ENCODE measurements at regions of chr2 and their contacts with region 1.

Region 1: DNA sequence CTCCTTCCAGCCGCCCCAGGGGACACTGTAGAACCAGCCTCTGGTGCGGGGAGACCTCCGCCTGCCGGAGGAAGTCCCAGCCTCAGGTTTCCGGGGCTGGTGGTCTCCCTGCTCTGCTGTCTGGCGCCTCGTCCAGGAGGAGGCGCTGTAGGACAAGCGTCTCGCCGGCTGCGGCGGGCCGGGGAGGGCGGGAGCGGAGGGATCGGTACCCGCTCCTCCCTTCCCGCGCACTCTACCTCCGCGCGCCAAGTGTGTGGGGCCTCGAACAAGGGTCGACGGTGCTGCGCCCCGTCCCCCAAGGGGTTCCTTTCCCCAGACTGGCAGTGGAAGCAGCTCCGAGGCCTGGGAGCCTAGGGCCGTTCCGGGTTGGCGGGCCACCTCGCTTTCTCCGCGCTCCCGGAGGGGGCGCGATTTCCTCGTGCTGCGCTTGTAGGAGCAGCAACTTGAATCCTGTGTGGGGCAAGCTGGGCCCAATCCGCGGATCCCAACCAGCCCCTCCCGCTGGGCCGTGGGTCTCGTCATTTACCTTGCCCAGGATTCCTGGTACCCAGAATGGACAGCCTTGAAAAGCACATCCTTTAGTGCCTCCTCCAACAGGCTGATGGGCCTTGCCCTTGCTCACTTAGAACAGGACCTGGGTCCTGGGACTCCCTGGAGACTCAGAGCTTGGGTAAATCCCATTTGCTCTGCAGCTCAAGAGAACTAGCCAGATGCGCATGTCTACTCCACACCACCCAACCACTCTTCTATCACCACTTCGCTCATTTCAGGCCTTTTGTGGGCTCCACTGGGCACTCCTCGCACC is 10.6 kb upstream of the HOXD4 start:
- DNase-seq: peak; percentile 37 to 84 (median 75)
- ATAC-seq: peak; percentile 93
- H3K4me3 ChIP-seq: peak overlapping the region; percentile 28 to 38
- H3K4me3 Mint-ChIP-seq: peak overlapping the region; percentile 8
- H3K27ac ChIP-seq: no peak overlapping the region
- H3K27ac Mint-ChIP-seq: no peak overlapping the region
- H3K4me1 ChIP-seq: peaks cover 22% of the 10 kb centered on the region
- H3K4me1 Mint-ChIP-seq: peaks cover 32% of the 10 kb centered on the region
- H3K27me3 ChIP-seq: peaks cover 46 to 47% of the 10 kb centered on the region in 2 experiments
- H3K27me3 Mint-ChIP-seq: peaks cover 80% of the 10 kb centered on the region
- CTCF ChIP-seq: peak; percentile 76

Region 2: GRCh38 chr2:176114120-176114929 is 26.4 kb before region 1 on chr2:
- CTCF ChIA-PET with region 1: no interaction called
- POLR2A ChIA-PET with region 1: no interaction called
- intact Hi-C with region 1: no loop called
- DNase-seq: no peak
- ATAC-seq: no peak
- H3K4me3 ChIP-seq: no peak overlapping the region
- H3K4me3 Mint-ChIP-seq: no peak overlapping the region
- H3K27ac ChIP-seq: no peak overlapping the region
- H3K27ac Mint-ChIP-seq: no peak overlapping the region
- H3K4me1 ChIP-seq: no peaks in the 10 kb centered on the region
- H3K4me1 Mint-ChIP-seq: peaks cover 8% of the 10 kb centered on the region
- H3K27me3 ChIP-seq: peaks cover 62 to 91% of the 10 kb centered on the region in 2 experiments
- H3K27me3 Mint-ChIP-seq: peaks cover 84% of the 10 kb centered on the region
- CTCF ChIP-seq: no peak

Region 3: DNA sequence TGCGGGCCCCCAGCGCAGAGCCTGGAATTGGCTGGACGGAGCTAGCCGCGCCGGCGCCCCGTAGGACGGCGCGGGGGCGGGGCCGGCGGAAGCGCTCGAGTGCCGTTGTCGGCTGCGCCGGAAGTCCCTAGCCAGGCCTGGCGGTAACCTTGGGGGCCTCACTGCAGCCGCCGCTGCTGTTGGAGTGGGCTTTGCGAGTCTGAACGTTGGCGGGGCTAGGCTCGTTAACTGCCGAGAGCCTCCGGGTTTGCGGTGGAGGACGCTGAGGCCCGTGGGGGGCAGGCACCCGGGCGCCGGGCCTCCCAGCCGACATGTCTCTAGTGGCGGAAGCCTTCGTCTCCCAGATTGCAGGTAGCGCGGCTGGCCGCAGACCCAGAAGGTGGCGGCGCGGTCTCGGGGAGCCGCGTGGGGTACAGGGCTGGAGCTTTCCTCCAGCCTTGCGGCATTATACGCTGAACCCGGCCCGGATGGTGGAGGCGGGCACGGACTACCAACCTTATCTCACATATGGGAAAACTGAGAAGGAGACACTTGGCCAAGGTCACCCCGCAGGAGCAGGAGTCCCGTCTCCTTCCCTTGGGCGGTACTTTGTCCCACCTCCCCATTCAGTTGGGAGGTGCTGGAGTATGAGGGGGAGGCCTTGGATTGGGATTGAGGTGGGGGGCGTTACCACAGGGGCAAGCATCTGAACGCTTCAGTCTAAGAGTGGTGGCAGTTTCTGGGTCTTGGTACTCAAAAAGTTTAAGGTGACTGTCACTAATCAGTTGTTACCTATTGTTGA is 128.8 kb after region 1 on chr2 and contains the start of gene MTX2:
- CTCF ChIA-PET with region 1: no interaction called
- POLR2A ChIA-PET with region 1: no interaction called
- intact Hi-C with region 1: loop called in 1 of 2 experiments (anchors 5 kb)
- DNase-seq: peak; percentile 44 to 83 (median 69)
- ATAC-seq: peak; percentile 86
- H3K4me3 ChIP-seq: peak within 1 kb of the TSS; percentile 86 to 93
- H3K4me3 Mint-ChIP-seq: peak within 1 kb of the TSS; percentile 95
- H3K27ac ChIP-seq: peak within 1 kb of the TSS; percentile 67 to 76
- H3K27ac Mint-ChIP-seq: peak within 1 kb of the TSS; percentile 93
- H3K4me1 ChIP-seq: peaks cover 10% of the 10 kb centered on the region
- H3K4me1 Mint-ChIP-seq: peaks cover 40% of the 10 kb centered on the region
- H3K27me3 ChIP-seq: no peaks in the 10 kb centered on the region
- H3K27me3 Mint-ChIP-seq: peaks cover under 1% of the 10 kb centered on the region
- CTCF ChIP-seq: no peak
- total RNA-seq, gene MTX2: 4.5 to 6.8 TPM

Region 4: DNA sequence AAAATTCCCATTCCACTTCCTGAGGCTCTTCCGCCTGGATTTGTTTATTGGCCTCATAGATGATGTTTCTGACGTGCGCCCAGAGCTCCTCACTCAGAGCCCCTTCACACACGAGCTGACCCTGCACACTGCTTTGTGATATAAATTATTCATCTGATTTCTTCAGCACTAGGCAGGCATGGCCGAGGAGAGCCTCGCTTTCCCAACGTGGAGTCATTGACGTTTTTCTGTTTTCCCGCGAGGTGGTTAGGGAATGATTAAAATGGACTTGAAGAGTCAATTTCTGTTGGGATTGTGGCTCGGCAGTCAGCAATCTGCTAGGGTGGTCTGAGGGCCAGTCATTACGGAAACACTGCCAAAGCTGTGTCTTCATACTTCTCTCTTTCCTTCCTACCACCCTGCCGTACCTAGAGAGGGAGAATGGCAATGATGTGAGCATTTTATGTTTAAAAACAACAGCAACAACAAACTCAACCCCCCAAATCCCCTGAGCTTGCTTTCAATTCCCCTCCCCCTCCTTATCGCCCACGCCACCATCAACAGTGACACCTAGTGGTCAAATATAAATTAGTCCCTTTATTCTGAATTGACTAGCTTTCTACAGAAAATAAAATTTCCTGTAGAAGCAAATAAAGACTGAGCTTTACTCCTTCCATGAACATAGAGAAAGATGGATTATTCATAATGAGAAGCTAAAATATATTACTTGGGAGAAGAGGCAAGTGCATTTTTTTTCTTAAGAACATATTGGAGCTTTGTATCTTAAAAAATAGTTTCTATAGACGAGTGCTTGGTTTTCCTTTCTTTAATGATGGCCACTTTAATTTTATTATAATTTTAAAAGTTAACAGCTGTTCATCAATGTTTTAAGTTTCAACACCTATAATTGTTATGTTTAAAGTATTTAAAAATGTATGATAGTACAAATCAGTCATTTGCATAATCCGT is 413.7 kb after region 1 on chr2:
- CTCF ChIA-PET with region 1: interaction called, 19 read pairs
- POLR2A ChIA-PET with region 1: no interaction called
- intact Hi-C with region 1: loop called (anchors 2 to 5 kb)
- DNase-seq: peak in 6 of 9 experiments; percentile 16 to 72 (median 40)
- ATAC-seq: peak; percentile 59
- H3K4me3 ChIP-seq: peak overlapping the region; percentile 47 to 51
- H3K4me3 Mint-ChIP-seq: peak overlapping the region; percentile 84
- H3K27ac ChIP-seq: no peak overlapping the region
- H3K27ac Mint-ChIP-seq: no peak overlapping the region
- H3K4me1 ChIP-seq: no peaks in the 10 kb centered on the region
- H3K4me1 Mint-ChIP-seq: peaks cover 11% of the 10 kb centered on the region
- H3K27me3 ChIP-seq: peaks cover 3% of the 10 kb centered on the region in 2 experiments
- H3K27me3 Mint-ChIP-seq: peaks cover 42% of the 10 kb centered on the region
- CTCF ChIP-seq: peak; percentile 77

Region 5: DNA sequence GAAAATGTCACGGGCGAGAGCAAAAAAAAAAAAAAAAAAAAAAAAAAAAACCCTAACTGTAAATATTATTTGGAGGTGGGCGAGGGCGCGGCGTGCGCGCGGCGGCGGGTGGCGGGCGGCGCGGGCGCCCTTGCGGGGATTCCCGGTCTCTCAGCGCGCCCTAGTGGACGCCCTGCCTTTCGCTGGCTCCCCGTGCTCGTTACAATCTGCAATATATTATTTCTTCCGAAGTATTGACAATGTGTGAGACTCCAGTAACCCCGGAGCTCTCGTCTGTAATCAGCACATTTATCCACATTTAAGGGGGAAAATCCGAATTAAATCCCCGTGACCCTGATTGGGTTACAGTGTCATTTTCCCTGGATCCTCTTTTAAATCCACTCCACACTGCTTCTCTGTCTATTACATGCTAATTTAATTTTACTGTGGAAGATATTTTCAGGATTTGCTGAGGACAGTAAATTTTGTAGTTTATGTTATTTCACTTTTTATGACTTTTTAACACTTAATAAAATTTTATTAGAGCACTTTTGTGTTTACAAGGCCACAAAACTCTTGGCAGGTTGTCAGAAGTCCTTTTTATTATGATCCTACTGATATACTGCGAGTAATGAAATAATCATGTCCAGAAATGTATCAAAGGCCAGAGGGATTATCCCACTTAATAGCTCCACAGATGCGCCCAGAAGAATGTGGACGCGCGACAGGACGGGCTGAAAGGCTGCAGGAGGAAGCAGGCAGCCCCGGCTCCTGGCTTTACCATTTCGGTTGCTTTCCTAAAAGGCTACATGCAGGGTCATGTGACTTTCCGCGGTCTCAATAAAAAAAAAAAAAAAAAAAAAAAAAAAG is 497.7 kb after region 1 on chr2:
- CTCF ChIA-PET with region 1: interaction called, 5 read pairs
- POLR2A ChIA-PET with region 1: no interaction called
- intact Hi-C with region 1: loop called (anchors 5 kb)
- DNase-seq: peak; percentile 19 to 74 (median 59)
- ATAC-seq: peak; percentile 87
- H3K4me3 ChIP-seq: peak overlapping the region; percentile 48 to 55
- H3K4me3 Mint-ChIP-seq: peak overlapping the region; percentile 71
- H3K27ac ChIP-seq: no peak overlapping the region
- H3K27ac Mint-ChIP-seq: no peak overlapping the region
- H3K4me1 ChIP-seq: no peaks in the 10 kb centered on the region
- H3K4me1 Mint-ChIP-seq: peaks cover 8% of the 10 kb centered on the region
- H3K27me3 ChIP-seq: peaks cover 9 to 23% of the 10 kb centered on the region in 2 experiments
- H3K27me3 Mint-ChIP-seq: peaks cover 66% of the 10 kb centered on the region
- CTCF ChIP-seq: peak; percentile 76

Region 6: DNA sequence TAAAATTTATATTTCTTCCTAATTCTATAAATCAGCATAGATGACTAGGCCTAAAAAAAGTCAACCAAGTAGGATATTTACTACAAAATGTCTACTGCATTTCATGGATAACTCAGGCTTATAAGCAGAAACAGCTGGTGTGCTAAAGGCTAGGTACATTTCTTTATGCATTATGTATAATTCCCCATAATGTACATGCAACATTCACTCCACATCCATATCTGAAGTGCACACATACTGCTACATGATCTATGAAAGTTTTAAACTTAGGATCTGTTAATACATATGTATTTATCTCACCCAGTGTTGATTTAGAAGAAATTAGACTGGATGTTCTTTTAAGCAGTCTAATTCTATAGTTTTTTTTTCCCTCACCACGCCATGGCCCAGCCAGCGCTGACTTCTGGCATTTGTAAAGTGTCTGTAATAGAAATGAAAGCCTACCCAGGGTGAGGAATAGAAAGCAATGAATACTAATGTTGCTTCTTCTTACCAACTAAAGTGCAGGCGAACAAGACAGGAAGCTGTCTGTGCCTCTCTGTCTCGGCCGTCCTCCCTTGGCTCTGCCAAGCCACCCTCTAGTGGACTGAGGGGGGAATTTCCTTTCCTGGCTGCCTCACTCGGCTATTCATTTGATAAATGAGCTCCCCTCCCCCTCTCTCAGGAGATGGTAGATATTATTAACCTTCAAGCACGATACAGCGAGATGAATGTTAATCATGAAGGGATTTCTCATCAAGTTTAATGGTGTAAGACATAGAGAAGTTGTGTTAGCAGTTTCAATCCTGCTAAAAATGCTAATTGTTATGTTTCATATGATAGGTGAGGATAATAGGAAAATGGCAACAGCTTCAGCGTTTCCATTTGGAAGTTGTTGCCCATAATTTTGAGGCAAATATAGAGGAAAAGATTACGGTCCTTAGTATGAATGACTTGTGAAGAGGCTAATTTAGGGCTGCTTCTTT is 513.0 kb after region 1 on chr2:
- CTCF ChIA-PET with region 1: interaction called, 8 read pairs
- POLR2A ChIA-PET with region 1: no interaction called
- intact Hi-C with region 1: loop called (anchors 1 to 5 kb)
- DNase-seq: peak in 5 of 9 experiments; percentile 22 to 55 (median 32)
- ATAC-seq: no peak
- H3K4me3 ChIP-seq: no peak overlapping the region
- H3K4me3 Mint-ChIP-seq: no peak overlapping the region
- H3K27ac ChIP-seq: no peak overlapping the region
- H3K27ac Mint-ChIP-seq: no peak overlapping the region
- H3K4me1 ChIP-seq: peaks cover 12% of the 10 kb centered on the region
- H3K4me1 Mint-ChIP-seq: peaks cover 14% of the 10 kb centered on the region
- H3K27me3 ChIP-seq: peaks cover 0 to 4% of the 10 kb centered on the region in 2 experiments
- H3K27me3 Mint-ChIP-seq: peaks cover 36% of the 10 kb centered on the region
- CTCF ChIP-seq: peak; percentile 42

Region 7: DNA sequence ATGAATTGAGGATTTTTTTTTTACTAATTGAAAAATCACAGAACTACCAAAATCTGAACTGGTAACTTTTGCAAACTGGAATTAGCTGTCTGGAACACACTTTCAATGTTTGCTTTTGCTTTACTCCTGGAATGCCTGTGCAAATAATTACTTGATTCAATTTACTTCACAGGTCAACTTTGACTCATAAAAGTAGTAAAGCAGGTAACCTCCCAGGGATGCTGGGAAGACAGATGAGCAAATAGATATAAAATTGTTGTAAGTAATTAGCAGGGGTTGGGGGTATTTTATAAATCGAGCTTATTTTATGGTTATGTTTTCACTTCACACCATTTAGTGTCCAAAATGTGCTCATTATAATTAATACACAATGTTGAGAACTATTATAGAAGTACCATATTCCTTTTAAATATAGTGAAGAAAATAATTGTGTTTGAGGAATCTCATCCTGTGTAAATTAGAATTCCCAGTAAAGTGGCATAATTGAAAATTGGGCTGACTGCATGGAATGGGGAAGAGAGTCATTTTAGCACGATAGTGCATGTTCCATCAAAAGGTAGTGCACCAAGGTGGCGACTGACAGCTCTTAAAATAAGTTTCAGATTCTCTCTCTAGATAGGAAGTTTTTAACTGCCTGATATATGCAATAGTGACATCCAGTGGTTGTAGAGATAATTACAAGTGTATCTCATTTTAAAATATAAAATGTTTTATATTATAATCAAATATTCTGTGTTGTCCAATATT is 673.8 kb after region 1 on chr2:
- CTCF ChIA-PET with region 1: no interaction called
- POLR2A ChIA-PET with region 1: no interaction called
- intact Hi-C with region 1: loop called in 1 of 2 experiments (anchors 5 kb)
- DNase-seq: peak in 2 of 9 experiments; percentile 51 to 65
- ATAC-seq: peak; percentile 79
- H3K4me3 ChIP-seq: no peak overlapping the region
- H3K4me3 Mint-ChIP-seq: peak overlapping the region; percentile 19
- H3K27ac ChIP-seq: no peak overlapping the region
- H3K27ac Mint-ChIP-seq: no peak overlapping the region
- H3K4me1 ChIP-seq: peaks cover 45% of the 10 kb centered on the region
- H3K4me1 Mint-ChIP-seq: peaks cover 42% of the 10 kb centered on the region
- H3K27me3 ChIP-seq: no peaks in the 10 kb centered on the region
- H3K27me3 Mint-ChIP-seq: no peaks in the 10 kb centered on the region
- CTCF ChIP-seq: peak; percentile 95

Measured in CD8-positive, alpha-beta T cell (primary cell).